Heart right ventricle (tissue), 16 donors: ENCODE measurements at regions of chr11 and their contacts with region 1.

Region 1: DNA sequence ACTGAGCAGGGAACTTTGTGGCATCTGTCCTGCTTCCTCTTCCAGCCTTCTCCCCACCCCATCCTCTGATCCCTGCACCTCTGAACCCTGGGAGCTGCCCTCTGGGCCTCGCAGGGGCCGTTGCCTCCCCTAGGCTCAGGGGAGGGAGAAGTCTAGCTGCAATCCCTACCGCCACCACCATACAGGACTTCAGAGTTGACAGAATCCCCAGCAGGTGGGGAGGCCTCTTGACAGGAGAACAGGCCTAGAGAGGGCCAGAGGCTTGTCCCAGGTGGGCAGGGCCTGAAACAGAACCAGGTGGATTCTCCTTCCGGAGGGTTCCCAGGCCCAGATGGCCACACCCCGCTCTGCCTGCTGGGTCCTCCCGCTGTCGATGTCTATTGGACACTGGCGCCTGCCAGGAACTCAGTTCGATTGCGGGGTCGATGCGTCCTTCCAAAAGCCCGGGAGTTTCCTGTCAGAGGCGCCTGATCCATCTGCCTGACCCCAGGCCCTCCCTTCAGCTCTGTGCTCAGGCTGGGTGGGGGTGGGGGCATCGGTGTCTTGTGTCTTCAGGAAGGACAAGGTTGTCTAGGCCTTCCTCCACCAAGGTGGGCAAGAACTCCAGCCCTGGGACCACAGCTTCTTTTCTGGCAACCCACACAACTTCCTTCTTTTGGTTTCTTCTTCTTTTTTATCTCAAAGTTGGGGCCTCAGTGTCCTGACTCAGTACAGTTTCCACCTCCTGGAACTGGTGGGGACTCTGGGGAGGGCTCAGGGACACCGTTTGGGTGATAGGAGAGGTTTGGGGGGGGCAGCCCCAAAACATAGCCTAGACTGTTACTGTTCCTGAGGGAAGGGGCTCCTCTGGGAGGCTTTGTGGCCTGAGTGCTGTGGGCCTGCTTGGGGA is 6.4 kb downstream of the STARD10 start:
- DNase-seq: no peak
- ATAC-seq: peak in 3 of 8 donors; percentile 3 to 28 (median 19)
- H3K4me3 ChIP-seq: no peak overlapping the region
- H3K27ac ChIP-seq: peak overlapping the region in 2 of 10 donors; percentile 10 to 73
- H3K4me1 ChIP-seq: peaks cover 3 to 40% (median 18%) of the 10 kb centered on the region in 9 donors
- H3K27me3 ChIP-seq: no peaks in the 10 kb centered on the region
- CTCF ChIP-seq: no peak

Region 2: DNA sequence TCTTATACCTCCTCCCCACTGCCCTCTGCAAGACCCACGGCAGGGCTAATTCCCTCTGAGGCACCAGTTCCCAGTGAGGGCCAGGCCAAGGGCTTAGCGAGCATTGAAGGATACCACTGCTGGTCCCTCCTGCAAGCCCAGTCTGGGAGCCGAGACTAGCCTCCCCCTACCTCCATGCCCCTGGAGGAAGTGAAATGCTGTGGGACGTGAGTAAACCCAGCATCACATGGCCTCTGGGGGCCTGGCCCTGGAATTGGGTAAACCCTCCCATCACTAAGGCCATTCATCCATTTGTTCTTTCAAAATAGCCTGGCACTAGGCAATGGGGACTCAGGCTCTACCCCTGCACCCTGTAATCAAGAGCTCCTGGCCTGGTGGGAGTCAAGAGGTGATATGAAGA is 59.9 kb before region 1 on chr11:
- intact Hi-C with region 1: loop called in 7 of 10 experiments (anchors 2 to 10 kb)
- DNase-seq: no peak
- ATAC-seq: no peak
- H3K4me3 ChIP-seq: no peak overlapping the region
- H3K27ac ChIP-seq: no peak overlapping the region
- H3K4me1 ChIP-seq: peaks cover 5 to 56% (median 17%) of the 10 kb centered on the region in 9 donors
- H3K27me3 ChIP-seq: no peaks in the 10 kb centered on the region
- CTCF ChIP-seq: no peak